ENCODE measurements at regions of chr4 and their contacts with region 1.

Region 1: DNA sequence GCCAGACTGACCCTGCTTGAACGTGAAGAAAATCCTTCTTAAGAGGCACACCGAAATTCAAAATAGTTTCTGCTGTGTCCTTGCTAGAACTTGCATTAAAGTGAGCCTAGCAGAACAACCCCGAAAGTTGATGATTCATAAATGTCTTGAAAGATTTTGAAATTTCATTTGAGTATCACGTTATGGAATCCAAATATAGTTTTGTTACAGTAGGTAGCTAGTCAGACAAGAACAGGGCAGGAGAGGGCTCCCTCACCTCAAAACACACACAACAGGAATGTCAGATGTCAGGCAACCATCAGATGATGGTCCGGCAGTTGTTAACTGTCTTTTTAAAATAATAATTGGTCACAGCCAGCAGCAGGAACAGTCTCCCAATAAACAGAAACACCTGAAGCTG is 259.6 kb upstream of the GNPDA2 start:
- DNase-seq: peak; percentile 82
- H3K4me3 ChIP-seq: no peak overlapping the region
- H3K27ac ChIP-seq: peak overlapping the region; percentile 70
- H3K4me1 ChIP-seq: peaks cover 26% of the 10 kb centered on the region
- H3K27me3 ChIP-seq: no peaks in the 10 kb centered on the region
- CTCF ChIP-seq: peak in 1 of 2 donors; percentile 38

Region 2: DNA sequence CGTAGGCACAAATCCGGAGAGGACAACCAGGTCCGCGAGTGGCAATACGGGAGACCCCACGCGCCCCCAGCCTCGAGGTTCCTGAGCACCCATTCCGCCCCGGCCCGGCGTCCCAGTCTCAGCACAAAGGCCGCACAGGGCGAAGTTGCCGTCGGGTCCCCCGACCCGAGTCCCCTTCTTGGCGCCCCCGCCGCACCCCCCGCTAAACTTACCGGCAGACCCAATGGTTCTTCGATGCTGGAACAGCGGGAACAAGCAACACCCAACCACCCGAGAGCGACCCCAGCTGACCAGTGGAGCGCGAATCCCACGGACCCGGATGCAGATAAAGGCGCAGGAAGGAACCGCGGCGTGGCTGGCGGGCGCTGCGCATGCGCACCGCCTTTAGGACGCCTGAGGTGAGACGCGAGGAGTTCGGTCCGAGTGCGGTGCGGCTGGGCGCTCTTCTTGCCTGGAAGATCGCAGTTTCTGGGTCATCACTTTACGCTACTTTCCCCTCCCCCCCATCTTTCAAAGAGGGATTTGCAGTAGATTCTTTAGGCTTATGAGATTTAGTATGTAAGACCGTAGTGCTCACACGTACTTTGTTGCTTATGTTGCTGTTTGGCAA is 259.6 kb before region 1 on chr4 and contains the start of gene GNPDA2:
- CTCF ChIA-PET with region 1: no interaction called
- dilution Hi-C with region 1: no loop called
- in situ Hi-C with region 1: no loop called
- intact Hi-C with region 1: no loop called
- DNase-seq: peak; percentile 81
- H3K4me3 ChIP-seq: peak within 1 kb of the TSS; percentile 75 to 92 (median 85)
- H3K27ac ChIP-seq: peak within 1 kb of the TSS; percentile 51
- H3K4me1 ChIP-seq: peaks cover 16% of the 10 kb centered on the region
- H3K27me3 ChIP-seq: no peaks in the 10 kb centered on the region
- CTCF ChIP-seq: peak in 1 of 2 donors; percentile 25
- total RNA-seq, gene GNPDA2: 19.0 to 22.3 TPM

Region 3: GRCh38 chr4:44961001-44961755 is 24.8 kb before region 1 on chr4:
- CTCF ChIA-PET with region 1: no interaction called
- dilution Hi-C with region 1: no loop called
- in situ Hi-C with region 1: no loop called
- intact Hi-C with region 1: loop called (anchors 2 kb)
- DNase-seq: peak; percentile 95
- H3K4me3 ChIP-seq: no peak overlapping the region
- H3K27ac ChIP-seq: peak overlapping the region; percentile 97
- H3K4me1 ChIP-seq: peaks cover 46% of the 10 kb centered on the region
- H3K27me3 ChIP-seq: no peaks in the 10 kb centered on the region
- CTCF ChIP-seq: no peak

Region 4: DNA sequence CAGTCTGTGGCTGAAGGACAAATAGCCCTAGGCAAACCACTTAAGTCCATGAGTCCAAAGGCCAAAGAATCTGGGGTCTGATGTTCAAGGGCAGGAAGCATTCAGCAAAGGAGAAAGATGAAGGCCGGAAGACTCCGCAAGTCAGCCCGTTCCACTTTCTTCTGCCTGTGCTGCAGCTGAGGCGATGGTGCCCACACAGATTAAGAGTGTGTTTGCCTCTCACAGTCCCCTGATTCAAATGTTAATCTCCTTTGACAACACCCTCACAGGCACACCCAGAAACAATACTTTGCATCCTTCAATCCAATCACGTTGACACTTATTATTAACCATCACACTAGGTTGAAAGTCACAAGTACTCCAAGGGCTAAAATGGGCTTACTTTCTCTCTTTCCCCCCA is 345.9 kb after region 1 on chr4:
- CTCF ChIA-PET with region 1: no interaction called
- dilution Hi-C with region 1: no loop called
- in situ Hi-C with region 1: no loop called
- intact Hi-C with region 1: loop called (anchors 2 kb)
- DNase-seq: no peak
- H3K4me3 ChIP-seq: no peak overlapping the region
- H3K27ac ChIP-seq: no peak overlapping the region
- H3K4me1 ChIP-seq: no peaks in the 10 kb centered on the region
- H3K27me3 ChIP-seq: no peaks in the 10 kb centered on the region
- CTCF ChIP-seq: no peak

Region 5: DNA sequence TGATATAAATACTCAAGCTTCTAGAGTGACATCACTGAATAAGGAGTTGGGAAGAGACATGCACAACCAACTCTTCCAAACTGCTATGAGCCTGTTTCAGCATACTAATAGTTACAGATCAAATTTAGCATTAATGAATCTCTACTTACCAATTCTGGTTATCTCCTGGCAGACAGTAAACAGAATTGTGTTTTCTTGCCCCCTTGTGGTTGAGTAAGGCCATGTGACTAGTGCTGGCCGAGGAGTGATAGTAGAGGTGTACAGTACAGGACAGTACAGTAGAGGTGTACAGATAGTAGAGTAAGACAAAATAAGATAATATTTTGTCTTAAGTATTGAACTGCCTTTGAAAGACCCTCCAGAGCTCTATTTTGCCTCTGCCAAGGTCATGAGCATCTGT is 456.5 kb after region 1 on chr4:
- CTCF ChIA-PET with region 1: no interaction called
- dilution Hi-C with region 1: no loop called
- in situ Hi-C with region 1: no loop called
- intact Hi-C with region 1: loop called (anchors 2 kb)
- DNase-seq: peak; percentile 31
- H3K4me3 ChIP-seq: no peak overlapping the region
- H3K27ac ChIP-seq: no peak overlapping the region
- H3K4me1 ChIP-seq: peaks cover 3% of the 10 kb centered on the region
- H3K27me3 ChIP-seq: no peaks in the 10 kb centered on the region
- CTCF ChIP-seq: peak; percentile 40 to 59

Measured in mammary epithelial cell (primary cell).